ENCODE measurements at regions of chr1 and their contacts with region 1.

Region 1: GRCh38 chr1:15046487-15047165 is 106.9 kb upstream of the TMEM51 start:
- DNase-seq: peak; percentile 67
- H3K4me3 ChIP-seq: no peak overlapping the region
- H3K27ac ChIP-seq: no peak overlapping the region
- H3K4me1 ChIP-seq: peaks cover 4% of the 10 kb centered on the region
- H3K27me3 ChIP-seq: no peaks in the 10 kb centered on the region
- CTCF ChIP-seq: peak; percentile 86 to 98

Region 2: DNA sequence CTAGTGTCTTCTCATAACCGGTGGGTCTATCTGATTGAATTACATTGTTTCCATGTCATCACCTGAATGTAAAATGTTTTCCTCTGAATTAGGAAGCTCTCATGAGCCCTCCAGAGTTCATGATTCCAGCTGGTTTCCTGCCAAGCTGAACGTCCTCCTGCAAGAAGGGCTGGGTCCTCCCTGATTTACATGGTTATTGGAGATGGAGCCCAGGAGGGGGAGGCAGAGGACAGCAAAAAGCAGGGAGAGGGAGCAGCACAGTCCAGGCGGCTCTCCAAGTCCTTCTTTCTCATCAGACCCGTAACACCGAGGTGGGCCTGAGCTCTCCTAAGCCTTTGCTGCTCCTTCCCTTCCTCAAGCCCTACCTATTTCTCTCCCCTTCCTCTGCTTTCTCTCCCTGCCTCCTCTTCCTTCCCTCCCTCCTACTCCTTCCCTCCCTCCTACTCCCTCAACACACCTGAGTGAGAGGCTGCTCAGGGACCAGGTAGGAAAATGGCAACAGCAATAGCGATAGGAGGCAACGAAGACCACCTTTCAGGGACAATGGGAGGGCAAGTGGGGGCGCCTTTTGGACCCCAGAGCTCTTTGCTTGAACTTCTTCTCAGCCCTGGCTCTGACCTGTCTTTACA is 1080.7 kb before region 1 on chr1:
- CTCF ChIA-PET with region 1: no interaction called
- dilution Hi-C with region 1: no loop called
- in situ Hi-C with region 1: no loop called
- intact Hi-C with region 1: loop called (anchors 1 kb)
- DNase-seq: peak; percentile 23
- H3K4me3 ChIP-seq: no peak overlapping the region
- H3K27ac ChIP-seq: no peak overlapping the region
- H3K4me1 ChIP-seq: no peaks in the 10 kb centered on the region
- H3K27me3 ChIP-seq: no peaks in the 10 kb centered on the region
- CTCF ChIP-seq: peak; percentile 20 to 60

Region 3: DNA sequence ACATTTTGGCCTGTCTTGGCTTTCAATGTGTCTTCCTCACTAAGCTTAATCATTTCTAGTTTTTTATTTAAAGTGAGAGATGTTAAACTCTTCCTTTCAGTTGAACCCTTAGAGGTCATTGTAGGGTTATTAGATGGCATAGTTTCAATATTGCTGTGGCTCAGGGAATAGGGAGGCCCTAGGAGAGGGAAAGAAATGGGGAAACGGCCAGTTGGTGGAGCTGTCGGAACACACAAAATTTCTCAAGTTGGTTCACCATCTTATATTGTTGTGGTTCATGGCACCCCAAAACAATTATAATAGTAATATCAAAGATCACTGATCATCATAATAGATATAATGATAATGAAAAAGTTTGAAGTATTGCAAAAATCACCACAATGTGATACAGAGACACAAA is 479.6 kb before region 1 on chr1:
- CTCF ChIA-PET with region 1: no interaction called
- dilution Hi-C with region 1: no loop called
- in situ Hi-C with region 1: no loop called
- intact Hi-C with region 1: loop called (anchors 1 kb)
- DNase-seq: peak; percentile 12
- H3K4me3 ChIP-seq: no peak overlapping the region
- H3K27ac ChIP-seq: no peak overlapping the region
- H3K4me1 ChIP-seq: no peaks in the 10 kb centered on the region
- H3K27me3 ChIP-seq: no peaks in the 10 kb centered on the region
- CTCF ChIP-seq: peak; percentile 25 to 45

Region 4: DNA sequence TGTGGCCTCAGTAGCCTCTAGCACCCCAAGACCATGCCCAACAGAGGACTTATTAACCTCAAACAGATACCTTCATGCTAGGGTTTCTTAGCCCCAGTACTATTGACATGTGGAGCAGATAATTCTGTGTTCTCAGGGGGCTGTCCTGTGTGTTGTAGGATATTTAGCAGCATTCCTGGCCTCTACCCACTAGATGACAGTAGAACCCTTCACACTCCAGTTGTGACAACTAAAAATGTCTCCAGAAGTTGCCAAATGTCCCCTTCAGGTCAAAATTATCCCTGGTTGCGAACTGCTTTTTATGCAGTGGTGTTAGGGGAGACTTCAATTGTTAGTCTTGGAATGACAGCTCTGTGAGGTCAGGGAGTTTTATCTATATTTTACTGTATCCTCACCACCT is 440.0 kb before region 1 on chr1:
- CTCF ChIA-PET with region 1: no interaction called
- dilution Hi-C with region 1: no loop called
- in situ Hi-C with region 1: loop called in 1 of 2 experiments (anchors 25 kb)
- intact Hi-C with region 1: loop called (anchors 1 kb)
- DNase-seq: no peak
- H3K4me3 ChIP-seq: no peak overlapping the region
- H3K27ac ChIP-seq: no peak overlapping the region
- H3K4me1 ChIP-seq: no peaks in the 10 kb centered on the region
- H3K27me3 ChIP-seq: no peaks in the 10 kb centered on the region
- CTCF ChIP-seq: peak; percentile 49 to 89

Region 5: DNA sequence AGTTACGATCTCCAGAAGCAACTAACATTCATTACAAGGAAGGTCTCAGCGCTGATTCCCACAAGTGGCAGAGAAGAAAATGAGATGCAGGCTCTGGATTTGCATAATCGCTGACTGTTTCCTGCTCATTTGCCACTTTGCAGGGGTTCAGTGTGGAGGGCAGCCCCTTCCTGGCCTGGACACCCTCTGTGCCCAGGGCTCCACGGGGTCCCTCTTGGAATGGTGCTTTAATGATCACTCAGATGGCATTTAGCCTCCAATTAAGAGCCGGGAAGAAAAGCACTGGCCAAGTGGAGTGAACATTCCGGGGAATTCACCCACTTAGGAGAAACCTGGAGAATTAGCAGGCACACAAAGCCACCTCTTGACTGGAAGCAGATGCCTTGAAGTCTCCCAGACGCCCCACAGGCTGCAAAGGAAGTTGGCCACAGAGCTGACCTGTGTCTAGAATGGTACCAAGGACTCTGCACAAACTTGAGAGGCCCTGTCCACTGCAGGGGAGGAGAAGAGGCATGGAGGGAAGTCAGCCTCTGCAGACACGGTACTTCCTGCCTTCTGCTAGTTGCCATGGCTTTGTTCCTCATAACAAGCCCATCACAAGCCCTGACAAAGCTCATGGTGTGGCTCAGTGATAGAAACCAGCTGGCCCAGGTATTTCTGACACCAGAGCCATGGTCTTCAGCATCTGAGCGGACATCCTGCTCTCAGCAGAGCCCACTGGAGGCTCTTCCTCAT is 290.9 kb before region 1 on chr1:
- CTCF ChIA-PET with region 1: no interaction called
- dilution Hi-C with region 1: no loop called
- in situ Hi-C with region 1: loop called in 1 of 2 experiments (anchors 25 kb)
- intact Hi-C with region 1: no loop called
- DNase-seq: peak; percentile 62
- H3K4me3 ChIP-seq: no peak overlapping the region
- H3K27ac ChIP-seq: peak overlapping the region; percentile 55
- H3K4me1 ChIP-seq: peaks cover 29% of the 10 kb centered on the region
- H3K27me3 ChIP-seq: no peaks in the 10 kb centered on the region
- CTCF ChIP-seq: no peak

Region 6: GRCh38 chr1:14826172-14826636 is 220.4 kb before region 1 on chr1:
- CTCF ChIA-PET with region 1: no interaction called
- dilution Hi-C with region 1: no loop called
- in situ Hi-C with region 1: no loop called
- intact Hi-C with region 1: loop called (anchors 1 kb)
- DNase-seq: no peak
- H3K4me3 ChIP-seq: no peak overlapping the region
- H3K27ac ChIP-seq: no peak overlapping the region
- H3K4me1 ChIP-seq: no peaks in the 10 kb centered on the region
- H3K27me3 ChIP-seq: no peaks in the 10 kb centered on the region
- CTCF ChIP-seq: no peak

Region 7: GRCh38 chr1:15100121-15100874 is 53.7 kb after region 1 on chr1:
- CTCF ChIA-PET with region 1: no interaction called
- dilution Hi-C with region 1: no loop called
- in situ Hi-C with region 1: no loop called
- intact Hi-C with region 1: loop called (anchors 5 kb)
- DNase-seq: peak; percentile 14
- H3K4me3 ChIP-seq: no peak overlapping the region
- H3K27ac ChIP-seq: no peak overlapping the region
- H3K4me1 ChIP-seq: no peaks in the 10 kb centered on the region
- H3K27me3 ChIP-seq: no peaks in the 10 kb centered on the region
- CTCF ChIP-seq: peak; percentile 98

Measured in mammary epithelial cell (primary cell).